ENCODE measurements at regions of chr1 and their contacts with region 1.

Region 1: GRCh38 chr1:117051224-117052064 is 8.7 kb upstream of the TTF2 start:
- DNase-seq: peak in 6 of 9 experiments; percentile 18 to 63 (median 34)
- ATAC-seq: peak; percentile 13
- H3K4me3 ChIP-seq: peak overlapping the region; percentile 7 to 23
- H3K4me3 Mint-ChIP-seq: peak overlapping the region; percentile 72
- H3K27ac ChIP-seq: peak overlapping the region in 1 of 2 experiments; percentile 52
- H3K27ac Mint-ChIP-seq: peak overlapping the region; percentile 87
- H3K4me1 ChIP-seq: peaks cover 49% of the 10 kb centered on the region
- H3K4me1 Mint-ChIP-seq: peaks cover 68% of the 10 kb centered on the region
- H3K27me3 ChIP-seq: no peaks in the 10 kb centered on the region
- H3K27me3 Mint-ChIP-seq: no peaks in the 10 kb centered on the region
- CTCF ChIP-seq: no peak

Region 2: DNA sequence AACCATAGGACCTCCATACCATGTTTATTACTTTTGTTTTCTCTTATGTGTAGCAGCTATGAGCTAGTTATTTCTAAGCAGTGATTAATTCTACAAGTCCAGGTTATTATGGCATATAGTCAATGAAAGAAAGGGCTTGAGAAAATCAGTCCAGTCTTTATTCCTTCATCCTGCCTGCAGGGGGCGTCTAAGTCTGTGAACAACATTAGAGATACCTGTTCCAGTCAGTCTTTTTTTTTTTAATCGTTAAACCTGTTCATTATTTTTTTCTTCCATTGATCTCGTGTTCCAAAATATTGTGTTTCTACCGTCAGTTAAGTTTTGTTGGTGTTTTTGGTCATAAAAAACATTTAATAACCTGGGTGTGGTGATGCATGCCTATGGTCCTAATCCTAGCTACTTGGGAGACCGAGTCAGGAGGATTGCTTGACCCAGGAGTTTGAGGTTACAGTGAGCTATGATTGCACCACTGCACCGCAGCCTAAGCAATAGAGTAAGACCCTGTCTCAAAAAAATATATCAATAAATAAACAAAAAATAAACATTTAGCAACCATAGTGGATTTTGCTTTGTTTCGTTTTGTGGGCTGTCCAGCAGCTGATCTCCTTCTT is 326.6 kb before region 1 on chr1:
- CTCF ChIA-PET with region 1: interaction called, 59 read pairs
- POLR2A ChIA-PET with region 1: no interaction called
- intact Hi-C with region 1: loop called (anchors 1 kb)
- DNase-seq: peak; percentile 52 to 86 (median 81)
- ATAC-seq: peak; percentile 75
- H3K4me3 ChIP-seq: no peak overlapping the region
- H3K4me3 Mint-ChIP-seq: no peak overlapping the region
- H3K27ac ChIP-seq: no peak overlapping the region
- H3K27ac Mint-ChIP-seq: no peak overlapping the region
- H3K4me1 ChIP-seq: no peaks in the 10 kb centered on the region
- H3K4me1 Mint-ChIP-seq: peaks cover 15% of the 10 kb centered on the region
- H3K27me3 ChIP-seq: no peaks in the 10 kb centered on the region
- H3K27me3 Mint-ChIP-seq: no peaks in the 10 kb centered on the region
- CTCF ChIP-seq: peak; percentile 97

Region 3: GRCh38 chr1:116878804-116879477 is 172.5 kb before region 1 on chr1:
- CTCF ChIA-PET with region 1: interaction called, 5 read pairs
- POLR2A ChIA-PET with region 1: interaction called, 3 read pairs
- intact Hi-C with region 1: loop called in 1 of 2 experiments (anchors 5 kb)
- DNase-seq: peak in 3 of 9 experiments; percentile 16 to 22 (median 16)
- ATAC-seq: no peak
- H3K4me3 ChIP-seq: peak overlapping the region in 1 of 2 experiments; percentile 24
- H3K4me3 Mint-ChIP-seq: no peak overlapping the region
- H3K27ac ChIP-seq: no peak overlapping the region
- H3K27ac Mint-ChIP-seq: no peak overlapping the region
- H3K4me1 ChIP-seq: peaks cover 35% of the 10 kb centered on the region
- H3K4me1 Mint-ChIP-seq: peaks cover 13% of the 10 kb centered on the region
- H3K27me3 ChIP-seq: no peaks in the 10 kb centered on the region
- H3K27me3 Mint-ChIP-seq: no peaks in the 10 kb centered on the region
- CTCF ChIP-seq: no peak

Region 4: DNA sequence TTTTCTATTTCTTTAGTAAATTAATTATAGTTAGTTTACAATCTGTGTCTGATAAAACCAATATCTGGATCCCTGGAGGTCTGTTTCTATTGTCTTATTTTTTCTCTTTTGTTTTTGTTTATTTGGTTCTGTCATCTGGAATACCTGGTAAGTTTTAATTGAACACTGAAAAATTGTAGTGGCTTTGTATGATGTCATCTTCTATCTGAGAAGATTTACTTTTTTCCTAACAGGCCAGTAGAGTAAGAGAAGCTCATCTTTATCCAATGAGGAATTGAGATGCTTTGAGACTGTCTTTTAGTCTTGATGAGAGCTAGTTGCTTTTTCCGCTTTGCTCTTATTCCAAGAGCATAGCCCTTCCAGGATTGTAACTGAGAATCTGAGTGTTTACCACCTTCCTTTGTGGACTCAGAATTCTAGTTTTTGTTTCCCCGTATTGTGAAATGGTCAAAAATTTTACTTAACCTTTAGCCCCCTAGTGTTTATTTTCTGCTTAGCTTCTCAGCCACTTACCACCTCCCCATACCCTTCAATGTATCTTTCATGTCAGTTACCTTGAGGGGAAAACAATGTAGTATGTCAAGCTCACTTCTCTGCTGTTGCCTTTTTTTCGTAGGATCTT is 116.7 kb before region 1 on chr1:
- CTCF ChIA-PET with region 1: interaction called, 4 read pairs
- POLR2A ChIA-PET with region 1: no interaction called
- intact Hi-C with region 1: loop called (anchors 2 kb)
- DNase-seq: peak in 2 of 9 experiments; percentile 43 to 58
- ATAC-seq: peak; percentile 21
- H3K4me3 ChIP-seq: no peak overlapping the region
- H3K4me3 Mint-ChIP-seq: no peak overlapping the region
- H3K27ac ChIP-seq: no peak overlapping the region
- H3K27ac Mint-ChIP-seq: no peak overlapping the region
- H3K4me1 ChIP-seq: peaks cover 22% of the 10 kb centered on the region
- H3K4me1 Mint-ChIP-seq: peaks cover 23% of the 10 kb centered on the region
- H3K27me3 ChIP-seq: no peaks in the 10 kb centered on the region
- H3K27me3 Mint-ChIP-seq: no peaks in the 10 kb centered on the region
- CTCF ChIP-seq: peak; percentile 32

Region 5: DNA sequence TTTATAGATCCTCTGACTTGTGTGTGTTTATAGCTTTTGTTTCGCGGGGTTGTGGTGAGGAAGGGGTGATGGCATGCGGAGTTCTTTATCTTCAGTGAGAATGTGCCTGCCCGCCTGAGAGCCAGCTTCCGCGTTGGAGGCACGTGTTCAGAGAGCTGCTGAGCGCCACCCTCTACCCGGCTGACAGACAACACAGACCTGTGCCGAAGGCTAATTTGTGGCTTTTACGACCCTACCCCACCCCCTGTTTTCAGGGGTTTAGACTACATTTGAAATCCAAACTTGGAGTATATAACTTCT is 64.2 kb before region 1 on chr1:
- CTCF ChIA-PET with region 1: no interaction called
- POLR2A ChIA-PET with region 1: interaction called, 8 read pairs
- intact Hi-C with region 1: loop called (anchors 1 to 5 kb)
- DNase-seq: peak; percentile 43 to 83 (median 74)
- ATAC-seq: peak; percentile 91
- H3K4me3 ChIP-seq: peak overlapping the region; percentile 29 to 53
- H3K4me3 Mint-ChIP-seq: peak overlapping the region; percentile 85
- H3K27ac ChIP-seq: peak overlapping the region; percentile 49 to 85
- H3K27ac Mint-ChIP-seq: peak overlapping the region; percentile 98
- H3K4me1 ChIP-seq: peaks cover 52% of the 10 kb centered on the region
- H3K4me1 Mint-ChIP-seq: peaks cover 69% of the 10 kb centered on the region
- H3K27me3 ChIP-seq: no peaks in the 10 kb centered on the region
- H3K27me3 Mint-ChIP-seq: no peaks in the 10 kb centered on the region
- CTCF ChIP-seq: no peak

Region 6: DNA sequence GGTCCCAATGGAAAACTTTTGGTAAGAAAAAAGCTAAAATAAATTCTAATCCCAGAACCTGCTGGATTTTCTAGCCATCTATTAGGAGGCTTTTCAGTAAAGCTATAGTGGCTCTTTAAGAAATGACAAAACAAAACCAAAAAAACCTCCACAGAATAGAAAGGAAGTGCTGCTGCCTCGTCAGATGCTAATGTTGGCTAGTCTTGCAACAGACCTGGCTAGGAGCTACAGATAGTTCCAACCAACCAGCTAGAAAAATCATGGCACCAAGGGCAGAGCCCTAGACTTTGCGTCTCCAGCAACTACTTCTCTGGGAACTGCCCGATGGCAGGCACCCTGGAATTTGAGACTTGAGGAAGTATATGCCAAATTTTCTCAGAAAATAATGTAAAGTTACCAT is 42.3 kb before region 1 on chr1:
- CTCF ChIA-PET with region 1: interaction called, 3 read pairs
- POLR2A ChIA-PET with region 1: no interaction called
- intact Hi-C with region 1: loop called (anchors 1 to 2 kb)
- DNase-seq: peak in 6 of 9 experiments; percentile 16 to 58 (median 38)
- ATAC-seq: peak; percentile 51
- H3K4me3 ChIP-seq: peak overlapping the region in 1 of 2 experiments; percentile 20
- H3K4me3 Mint-ChIP-seq: peak overlapping the region; percentile 64
- H3K27ac ChIP-seq: peak overlapping the region; percentile 9 to 50
- H3K27ac Mint-ChIP-seq: peak overlapping the region; percentile 92
- H3K4me1 ChIP-seq: peaks cover 53% of the 10 kb centered on the region
- H3K4me1 Mint-ChIP-seq: peaks cover 77% of the 10 kb centered on the region
- H3K27me3 ChIP-seq: no peaks in the 10 kb centered on the region
- H3K27me3 Mint-ChIP-seq: no peaks in the 10 kb centered on the region
- CTCF ChIP-seq: no peak

Region 7: GRCh38 chr1:117093870-117094621 is 42.6 kb after region 1 on chr1:
- CTCF ChIA-PET with region 1: no interaction called
- POLR2A ChIA-PET with region 1: no interaction called
- intact Hi-C with region 1: no loop called
- DNase-seq: peak in 5 of 9 experiments; percentile 19 to 45 (median 30)
- ATAC-seq: peak; percentile 98
- H3K4me3 ChIP-seq: no peak overlapping the region
- H3K4me3 Mint-ChIP-seq: no peak overlapping the region
- H3K27ac ChIP-seq: no peak overlapping the region
- H3K27ac Mint-ChIP-seq: no peak overlapping the region
- H3K4me1 ChIP-seq: no peaks in the 10 kb centered on the region
- H3K4me1 Mint-ChIP-seq: no peaks in the 10 kb centered on the region
- H3K27me3 ChIP-seq: no peaks in the 10 kb centered on the region
- H3K27me3 Mint-ChIP-seq: no peaks in the 10 kb centered on the region
- CTCF ChIP-seq: peak; percentile 35

Region 8: DNA sequence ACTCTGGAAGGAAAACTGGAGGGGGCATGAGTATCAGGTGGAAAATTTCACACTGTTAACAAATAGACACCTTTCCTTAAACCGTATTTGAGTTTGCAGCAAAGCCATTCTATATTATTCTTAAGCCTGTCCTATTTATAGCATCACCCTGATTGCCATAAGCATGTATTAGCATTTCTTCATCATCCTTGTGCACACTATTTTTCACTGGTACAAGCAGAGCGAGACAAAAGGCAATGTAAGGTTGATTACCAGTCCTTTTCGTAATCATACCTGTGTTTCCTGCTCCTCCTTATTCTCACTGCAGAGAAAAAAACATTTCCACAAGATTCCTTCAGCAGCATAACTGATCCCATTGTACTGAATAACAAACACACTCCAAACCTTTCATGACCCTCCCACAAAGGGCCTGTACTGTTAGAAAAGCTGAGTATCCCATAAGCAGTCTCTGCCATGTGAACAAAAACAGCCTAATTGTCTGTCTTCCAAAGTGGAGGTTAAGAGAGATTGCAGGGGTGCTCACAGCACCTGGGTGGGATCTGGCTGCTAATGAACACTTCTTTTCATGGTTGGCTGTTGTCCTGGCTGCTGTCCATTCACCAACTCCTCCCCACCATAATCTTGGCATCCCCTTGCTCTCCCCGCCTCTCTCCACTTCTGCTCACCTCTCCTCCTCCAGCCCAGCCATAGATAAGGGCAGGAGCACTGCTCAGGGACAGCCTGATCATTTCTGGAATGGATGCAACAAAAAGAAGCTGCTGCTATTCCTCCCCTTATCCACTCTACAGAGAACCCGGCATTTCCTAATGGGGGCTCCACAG is 128.9 kb after region 1 on chr1:
- CTCF ChIA-PET with region 1: no interaction called
- POLR2A ChIA-PET with region 1: no interaction called
- intact Hi-C with region 1: no loop called
- DNase-seq: no peak
- ATAC-seq: no peak
- H3K4me3 ChIP-seq: no peak overlapping the region
- H3K4me3 Mint-ChIP-seq: no peak overlapping the region
- H3K27ac ChIP-seq: no peak overlapping the region
- H3K27ac Mint-ChIP-seq: no peak overlapping the region
- H3K4me1 ChIP-seq: no peaks in the 10 kb centered on the region
- H3K4me1 Mint-ChIP-seq: no peaks in the 10 kb centered on the region
- H3K27me3 ChIP-seq: no peaks in the 10 kb centered on the region
- H3K27me3 Mint-ChIP-seq: no peaks in the 10 kb centered on the region
- CTCF ChIP-seq: no peak